ENCODE measurements at regions of chr9 and their contacts with region 1.

Region 1: DNA sequence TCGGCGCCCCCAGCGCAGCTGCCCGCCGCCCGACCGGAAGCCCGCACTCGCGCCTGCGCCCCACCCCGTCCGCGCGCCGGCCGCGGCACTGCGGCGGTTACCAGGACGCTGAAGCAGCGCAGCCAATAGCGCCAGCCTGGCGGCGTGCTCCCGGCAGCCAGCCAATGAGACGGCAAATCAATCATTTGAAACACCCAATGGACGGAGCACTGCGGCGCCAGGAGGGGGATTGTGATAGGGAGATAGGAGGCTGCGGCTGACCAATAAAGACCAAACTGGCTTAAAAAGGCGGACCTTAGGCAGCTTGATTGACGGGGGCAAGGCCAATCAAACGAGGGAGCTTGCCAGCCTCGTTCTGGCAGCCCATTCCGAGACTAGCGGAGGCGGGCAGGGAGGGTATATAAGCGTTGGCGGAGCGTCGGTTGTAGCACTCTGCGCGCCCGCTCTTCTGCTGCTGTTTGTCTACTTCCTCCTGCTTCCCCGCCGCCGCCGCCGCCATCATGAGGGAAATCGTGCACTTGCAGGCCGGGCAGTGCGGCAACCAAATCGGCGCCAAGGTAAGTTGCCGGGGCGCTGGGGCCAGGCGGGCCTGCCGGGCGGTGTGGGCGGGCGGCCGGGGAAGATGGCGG is at the start of gene TUBB4B:
- DNase-seq: peak; percentile 99
- H3K4me3 ChIP-seq: peak within 1 kb of the TSS; percentile 78
- CTCF ChIP-seq: no peak

Region 2: GRCh38 chr9:137114610-137115391 is 126.2 kb before region 1 on chr9 and contains the start of gene DPP7:
- CTCF ChIA-PET with region 1: interaction called, 14 read pairs
- POLR2A ChIA-PET with region 1: interaction called, 5 read pairs
- DNase-seq: no peak
- H3K4me3 ChIP-seq: peak within 1 kb of the TSS; percentile 59
- CTCF ChIP-seq: no peak

Region 3: GRCh38 chr9:137188490-137189296 is 52.3 kb before region 1 on chr9 and contains the starts of genes ANAPC2 and SSNA1:
- CTCF ChIA-PET with region 1: interaction called, 9 read pairs
- POLR2A ChIA-PET with region 1: interaction called, 15 read pairs
- DNase-seq: peak; percentile 36
- H3K4me3 ChIP-seq: peak within 1 kb of the TSS; percentile 96
- CTCF ChIP-seq: peak; percentile 62

Region 4: DNA sequence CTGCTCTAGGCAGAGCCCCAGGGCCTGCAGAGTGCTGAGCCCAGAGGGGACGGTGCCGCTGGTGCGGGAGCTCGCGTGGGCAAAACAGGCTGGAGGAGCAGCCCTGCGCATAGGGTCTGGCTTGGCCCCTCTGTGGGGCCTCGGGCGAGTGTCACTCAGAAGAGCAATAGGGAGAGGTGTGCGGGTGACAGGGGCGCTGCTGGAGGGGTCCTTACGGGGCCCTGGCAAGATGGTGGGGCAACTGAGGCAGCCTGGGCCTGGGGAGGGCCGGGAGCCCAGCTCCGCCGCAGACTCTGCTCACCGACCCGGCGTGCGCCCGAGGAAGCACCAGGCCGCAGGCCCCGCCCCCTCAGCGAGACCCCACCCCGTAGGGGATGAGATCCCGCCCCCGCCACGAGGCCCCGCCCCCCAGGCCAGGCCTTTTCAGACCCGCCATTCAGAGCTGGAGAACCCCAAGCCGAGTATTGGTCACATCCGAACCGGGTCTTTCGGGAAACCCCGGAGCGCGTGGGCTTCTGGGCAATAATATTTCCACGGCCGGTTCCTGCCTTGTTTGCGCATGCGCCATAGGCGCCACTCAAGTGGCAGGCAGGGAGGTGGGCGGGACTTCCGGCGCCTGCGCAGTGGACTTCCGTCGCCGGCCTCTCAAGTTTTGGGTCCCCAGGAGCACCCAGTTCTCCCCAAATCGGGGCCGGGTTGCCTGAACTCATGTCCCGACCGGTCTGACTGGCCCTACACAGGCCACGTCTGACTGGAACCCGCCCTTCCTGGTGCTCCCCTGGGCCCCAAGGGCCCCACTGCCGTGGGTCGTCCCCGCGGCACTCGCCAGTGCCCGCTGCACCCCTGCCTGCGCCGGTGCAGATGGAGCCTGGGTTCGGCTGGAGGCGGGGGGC is 17.7 kb before region 1 on chr9:
- CTCF ChIA-PET with region 1: interaction called, 139 read pairs
- POLR2A ChIA-PET with region 1: interaction called, 19 read pairs
- DNase-seq: peak; percentile 80
- H3K4me3 ChIP-seq: peak overlapping the region; percentile 87
- CTCF ChIP-seq: no peak

Region 5: DNA sequence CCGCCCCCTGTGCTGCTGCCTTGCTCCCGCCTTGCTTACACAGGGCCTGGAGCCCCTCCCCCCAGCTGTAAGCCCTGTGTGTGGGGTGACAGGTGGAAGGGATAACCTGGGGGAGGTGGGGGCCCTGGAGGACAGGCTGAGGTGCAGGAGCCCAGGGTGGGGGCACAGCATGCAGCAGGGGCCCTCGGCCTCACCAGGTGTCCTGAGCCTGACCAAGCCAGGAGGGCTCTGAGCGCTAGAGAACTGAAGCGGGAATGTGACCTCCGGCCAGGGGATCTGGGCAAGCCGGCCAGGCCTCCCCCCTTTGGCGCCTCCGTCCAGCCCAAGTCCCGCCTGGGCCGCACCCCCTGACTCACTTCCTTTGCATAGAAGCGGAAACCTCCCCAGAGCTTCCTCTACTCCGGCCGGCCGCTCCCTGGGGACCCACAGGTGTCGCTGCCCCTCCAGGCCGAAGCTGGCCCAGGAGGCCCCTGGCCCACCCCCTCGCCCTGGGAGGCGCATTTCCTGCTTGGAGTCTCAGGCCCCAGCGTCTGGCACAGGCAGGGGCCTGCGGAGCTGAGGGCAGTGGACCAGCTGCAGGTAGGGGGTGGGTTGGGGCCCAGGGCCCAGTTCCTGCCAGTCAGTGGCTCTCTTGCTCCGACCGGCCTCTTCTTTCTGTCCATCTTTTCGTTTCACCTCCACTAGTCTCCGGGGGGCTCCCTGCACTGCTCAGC is 36.5 kb after region 1 on chr9 and contains the start of gene TOR4A:
- CTCF ChIA-PET with region 1: interaction called, 7 read pairs
- POLR2A ChIA-PET with region 1: interaction called, 18 read pairs
- DNase-seq: peak; percentile 26
- H3K4me3 ChIP-seq: peak within 1 kb of the TSS; percentile 63
- CTCF ChIP-seq: no peak

Region 6: DNA sequence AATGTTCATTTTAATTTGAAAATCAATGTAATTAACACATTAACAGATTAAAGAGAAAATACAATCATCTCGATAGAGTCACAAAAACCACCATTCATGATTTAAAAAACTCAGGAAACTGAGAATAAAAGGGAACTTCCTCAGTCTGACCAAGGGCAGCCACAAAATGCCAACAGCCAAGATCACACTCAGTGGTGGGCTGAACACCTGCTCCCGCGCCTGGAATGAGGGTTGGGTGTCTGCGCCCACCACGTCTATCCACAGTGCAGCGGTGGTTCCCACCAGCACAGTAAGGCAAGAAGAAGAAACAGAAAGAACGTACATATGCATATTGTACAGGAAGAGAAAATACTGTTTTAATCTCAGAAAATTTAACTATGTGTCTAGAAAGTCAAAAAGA is 229.8 kb after region 1 on chr9:
- CTCF ChIA-PET with region 1: no interaction called
- POLR2A ChIA-PET with region 1: no interaction called
- DNase-seq: no peak
- H3K4me3 ChIP-seq: no peak overlapping the region
- CTCF ChIP-seq: no peak

Measured in AG04449 (cell line).